ENCODE measurements at regions of chr2 and their contacts with region 1.

Region 1: DNA sequence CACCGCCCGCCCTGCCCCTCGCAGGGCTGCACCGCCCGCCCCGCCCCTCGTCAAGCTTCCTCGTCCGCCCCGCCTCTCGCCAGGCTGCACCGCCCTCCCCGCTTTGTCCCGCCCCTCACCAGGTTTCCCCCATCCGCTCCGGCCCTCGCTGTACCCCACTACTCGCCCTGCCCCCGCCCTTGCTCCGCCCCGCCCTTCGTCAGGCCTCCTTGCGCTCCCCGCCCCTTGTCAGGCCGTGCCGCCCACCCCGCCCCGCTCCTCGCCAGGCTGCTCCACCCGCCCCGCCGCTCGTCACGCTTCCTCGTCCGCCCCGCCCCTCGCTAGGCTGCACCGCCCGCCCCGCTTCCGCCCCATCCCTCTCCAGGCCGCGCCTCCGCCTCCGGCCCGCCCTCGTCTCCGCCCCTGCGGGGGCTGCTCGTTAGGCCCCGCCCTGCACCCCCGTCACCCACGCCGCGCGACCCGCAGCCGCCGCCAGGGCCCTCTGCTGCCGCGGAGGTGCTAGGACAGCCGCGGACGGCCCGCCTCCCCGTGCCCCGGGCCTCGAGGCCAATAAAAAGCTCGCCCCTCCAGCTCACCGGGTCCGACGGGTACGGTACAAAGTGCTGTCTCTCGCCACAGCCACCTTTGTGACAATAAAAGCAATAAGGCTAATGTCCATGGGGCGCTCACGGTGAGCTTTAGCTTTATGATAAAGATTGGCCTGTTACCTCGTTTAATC is 574 bp upstream of the DNPEP start:
- DNase-seq: peak; percentile 98 to 99
- ATAC-seq: peak; percentile 79 to 90 (median 80)
- H3K4me3 ChIP-seq: peak overlapping the region; percentile 12
- H3K4me3 Mint-ChIP-seq: peak overlapping the region; percentile 63
- H3K27ac ChIP-seq: peak overlapping the region; percentile 71
- H3K27ac Mint-ChIP-seq: peak overlapping the region; percentile 92 to 98
- H3K4me1 ChIP-seq: peaks cover 18% of the 10 kb centered on the region
- H3K4me1 Mint-ChIP-seq: peaks cover 4 to 21% of the 10 kb centered on the region in 2 donors
- H3K27me3 ChIP-seq: no peaks in the 10 kb centered on the region
- H3K27me3 Mint-ChIP-seq: peaks cover 0 to 4% of the 10 kb centered on the region in 2 donors
- CTCF ChIP-seq: peak; percentile 61

Region 2: GRCh38 chr2:219177552-219178376 is 210.5 kb before region 1 on chr2 and contains the start of gene RETREG2:
- intact Hi-C with region 1: loop called (anchors 10 kb)
- DNase-seq: peak; percentile 79 to 96
- ATAC-seq: peak; percentile 57 to 71 (median 63)
- H3K4me3 ChIP-seq: peak within 1 kb of the TSS; percentile 61
- H3K4me3 Mint-ChIP-seq: peak within 1 kb of the TSS; percentile 97
- H3K27ac ChIP-seq: peak within 1 kb of the TSS; percentile 98
- H3K27ac Mint-ChIP-seq: peak within 1 kb of the TSS; percentile 99 to 100
- H3K4me1 ChIP-seq: peaks cover 43% of the 10 kb centered on the region
- H3K4me1 Mint-ChIP-seq: peaks cover 47 to 67% of the 10 kb centered on the region in 2 donors
- H3K27me3 ChIP-seq: no peaks in the 10 kb centered on the region
- H3K27me3 Mint-ChIP-seq: no peaks in the 10 kb centered on the region
- CTCF ChIP-seq: peak; percentile 38
- total RNA-seq, gene RETREG2: 77.0 to 81.9 (median 79.0) TPM

Region 3: DNA sequence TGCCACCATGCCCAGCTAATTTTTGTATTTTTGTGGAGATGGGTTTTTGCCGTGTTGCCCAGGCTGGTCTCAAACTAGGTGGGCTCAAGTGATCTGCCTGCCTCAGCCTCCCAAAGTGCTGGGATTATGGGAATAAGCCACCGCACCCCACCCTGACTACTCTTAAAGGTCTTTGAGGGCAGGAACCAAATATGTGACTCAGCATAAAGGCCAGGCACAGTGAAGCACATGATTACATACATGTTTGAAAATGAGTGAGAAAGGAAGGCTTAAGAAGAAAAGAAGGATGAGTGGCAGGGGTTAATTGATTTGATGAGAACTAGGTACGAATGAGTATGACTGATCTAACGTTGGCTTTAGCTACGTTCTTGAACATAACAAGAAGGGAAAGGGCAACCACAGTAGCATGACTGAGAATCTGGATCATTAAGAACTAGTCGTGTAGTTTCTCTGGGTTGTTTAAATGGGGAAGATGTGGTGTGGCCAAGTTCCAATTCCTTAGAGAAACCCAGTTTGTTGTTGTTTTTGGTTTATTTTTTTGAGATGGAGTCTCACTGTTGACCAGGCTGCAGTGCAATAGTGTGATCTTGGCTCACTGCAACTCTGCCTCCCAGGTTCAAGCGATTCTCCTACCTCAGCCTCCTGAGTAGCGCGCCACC is 62.5 kb before region 1 on chr2:
- intact Hi-C with region 1: no loop called
- DNase-seq: no peak
- ATAC-seq: no peak
- H3K4me3 ChIP-seq: no peak overlapping the region
- H3K4me3 Mint-ChIP-seq: no peak overlapping the region
- H3K27ac ChIP-seq: no peak overlapping the region
- H3K27ac Mint-ChIP-seq: no peak overlapping the region
- H3K4me1 ChIP-seq: peaks cover under 1% of the 10 kb centered on the region
- H3K4me1 Mint-ChIP-seq: no peaks in the 10 kb centered on the region
- H3K27me3 ChIP-seq: peaks cover 4% of the 10 kb centered on the region
- H3K27me3 Mint-ChIP-seq: peaks cover 38 to 61% of the 10 kb centered on the region in 2 donors
- CTCF ChIP-seq: no peak